CD8-positive, alpha-beta T cell (primary cell): ENCODE measurements at regions of chr12 and their contacts with region 1.

Region 1: DNA sequence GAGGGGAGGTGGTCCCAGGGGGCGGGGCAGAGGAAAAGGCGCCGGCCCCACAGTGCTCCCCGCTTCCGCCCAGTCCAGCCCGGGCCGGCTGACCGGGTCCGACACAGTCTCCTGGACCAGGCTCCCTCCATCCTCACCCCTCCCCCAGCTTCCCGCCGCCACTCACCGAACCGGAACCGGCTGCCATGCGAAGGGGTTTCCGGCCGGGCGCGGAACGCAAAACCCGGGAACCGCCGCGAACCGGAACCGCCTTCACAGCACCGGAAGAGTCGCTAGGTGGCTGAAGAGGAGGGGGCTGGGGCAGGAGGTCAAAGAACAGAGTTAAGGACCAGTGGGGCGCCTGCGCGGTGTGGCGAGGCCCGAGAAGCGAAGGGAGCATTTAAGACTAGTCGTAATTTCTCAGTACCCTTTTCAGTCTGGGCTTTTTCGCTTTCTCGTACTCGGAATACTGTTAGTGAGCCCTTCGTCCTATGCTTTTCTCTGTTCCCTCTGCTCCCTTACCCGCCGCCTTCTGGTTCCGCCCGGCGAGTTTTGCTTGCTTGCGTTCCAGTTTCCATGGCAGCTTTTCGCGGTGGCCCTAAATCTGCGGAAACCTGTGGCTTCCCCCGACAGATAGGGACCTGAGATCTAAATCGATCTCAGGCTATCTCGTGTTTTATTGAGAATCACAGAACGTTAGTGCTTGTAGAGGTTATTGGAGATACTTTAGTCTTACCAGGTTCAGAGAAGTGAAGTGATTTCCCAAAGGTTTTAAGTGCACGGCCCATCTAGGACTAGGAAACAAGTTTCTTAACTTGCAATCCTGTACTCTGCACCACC is at the start of gene SENP1:
- DNase-seq: peak; percentile 82 to 95 (median 89)
- ATAC-seq: peak; percentile 78
- H3K4me3 ChIP-seq: peak within 1 kb of the TSS; percentile 81 to 89
- H3K4me3 Mint-ChIP-seq: peak within 1 kb of the TSS; percentile 88
- H3K27ac ChIP-seq: peak within 1 kb of the TSS; percentile 84 to 95
- H3K27ac Mint-ChIP-seq: peak within 1 kb of the TSS; percentile 94
- H3K4me1 ChIP-seq: peaks cover 21% of the 10 kb centered on the region
- H3K4me1 Mint-ChIP-seq: peaks cover 54% of the 10 kb centered on the region
- H3K27me3 ChIP-seq: no peaks in the 10 kb centered on the region
- H3K27me3 Mint-ChIP-seq: no peaks in the 10 kb centered on the region
- CTCF ChIP-seq: no peak
- total RNA-seq, gene SENP1: 24.4 to 24.6 TPM

Region 2: DNA sequence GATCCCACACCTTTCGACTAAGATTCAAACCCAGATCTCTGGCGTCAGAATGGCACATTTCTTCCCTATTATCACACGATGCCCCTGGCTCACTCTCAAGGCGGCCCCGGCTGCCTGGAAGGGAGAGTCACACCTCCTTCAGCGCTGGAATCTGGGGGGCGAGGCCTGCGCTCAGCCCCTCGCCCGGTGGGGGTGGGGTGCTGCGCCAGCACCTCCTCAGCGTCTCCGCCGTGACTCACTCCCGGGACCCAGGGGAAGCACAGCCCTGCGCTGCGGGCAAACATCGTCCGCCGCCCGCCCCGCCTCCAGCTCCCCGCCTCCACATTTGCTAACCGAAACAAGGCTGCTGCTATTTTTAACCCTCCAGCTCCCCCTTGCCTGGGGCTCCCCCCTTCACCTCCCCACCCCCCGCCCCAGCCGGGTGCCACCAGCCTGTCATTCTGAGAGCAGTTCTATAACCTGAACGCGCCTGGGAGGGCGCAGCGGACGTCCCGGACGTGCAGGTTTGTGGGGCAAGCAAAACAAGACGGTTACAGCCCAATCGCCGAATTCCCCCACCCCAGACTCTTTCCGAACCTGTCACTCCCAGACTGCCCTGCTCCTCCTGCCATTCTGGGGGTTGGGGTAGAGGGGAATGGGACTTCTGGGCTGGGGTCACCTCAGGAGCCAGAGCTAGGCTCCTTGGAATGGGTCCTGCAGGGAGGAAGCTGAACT is 293.1 kb before region 1 on chr12:
- CTCF ChIA-PET with region 1: no interaction called
- POLR2A ChIA-PET with region 1: no interaction called
- intact Hi-C with region 1: loop called (anchors 5 to 10 kb)
- DNase-seq: peak; percentile 77 to 95 (median 92)
- ATAC-seq: peak; percentile 73
- H3K4me3 ChIP-seq: peak overlapping the region; percentile 44 to 59
- H3K4me3 Mint-ChIP-seq: peak overlapping the region; percentile 82
- H3K27ac ChIP-seq: peak overlapping the region; percentile 65 to 73
- H3K27ac Mint-ChIP-seq: peak overlapping the region; percentile 97
- H3K4me1 ChIP-seq: peaks cover 95% of the 10 kb centered on the region
- H3K4me1 Mint-ChIP-seq: peaks cover 93% of the 10 kb centered on the region
- H3K27me3 ChIP-seq: no peaks in the 10 kb centered on the region
- H3K27me3 Mint-ChIP-seq: no peaks in the 10 kb centered on the region
- CTCF ChIP-seq: no peak

Region 3: GRCh38 chr12:48119078-48119833 is 13.2 kb after region 1 on chr12 and contains the start of gene PFKM:
- CTCF ChIA-PET with region 1: interaction called, 4 read pairs
- POLR2A ChIA-PET with region 1: interaction called, 5 read pairs
- intact Hi-C with region 1: loop called in 1 of 2 experiments (anchors 2 kb)
- DNase-seq: peak; percentile 8 to 82 (median 52)
- ATAC-seq: peak; percentile 99
- H3K4me3 ChIP-seq: peak within 1 kb of the TSS; percentile 58 to 67
- H3K4me3 Mint-ChIP-seq: peak within 1 kb of the TSS; percentile 91
- H3K27ac ChIP-seq: no peak within 1 kb of the TSS
- H3K27ac Mint-ChIP-seq: peak within 1 kb of the TSS; percentile 70
- H3K4me1 ChIP-seq: peaks cover 7% of the 10 kb centered on the region
- H3K4me1 Mint-ChIP-seq: peaks cover 20% of the 10 kb centered on the region
- H3K27me3 ChIP-seq: no peaks in the 10 kb centered on the region
- H3K27me3 Mint-ChIP-seq: peaks cover 15% of the 10 kb centered on the region
- CTCF ChIP-seq: no peak
- total RNA-seq, gene PFKM: 6.0 to 6.9 TPM

Region 4: DNA sequence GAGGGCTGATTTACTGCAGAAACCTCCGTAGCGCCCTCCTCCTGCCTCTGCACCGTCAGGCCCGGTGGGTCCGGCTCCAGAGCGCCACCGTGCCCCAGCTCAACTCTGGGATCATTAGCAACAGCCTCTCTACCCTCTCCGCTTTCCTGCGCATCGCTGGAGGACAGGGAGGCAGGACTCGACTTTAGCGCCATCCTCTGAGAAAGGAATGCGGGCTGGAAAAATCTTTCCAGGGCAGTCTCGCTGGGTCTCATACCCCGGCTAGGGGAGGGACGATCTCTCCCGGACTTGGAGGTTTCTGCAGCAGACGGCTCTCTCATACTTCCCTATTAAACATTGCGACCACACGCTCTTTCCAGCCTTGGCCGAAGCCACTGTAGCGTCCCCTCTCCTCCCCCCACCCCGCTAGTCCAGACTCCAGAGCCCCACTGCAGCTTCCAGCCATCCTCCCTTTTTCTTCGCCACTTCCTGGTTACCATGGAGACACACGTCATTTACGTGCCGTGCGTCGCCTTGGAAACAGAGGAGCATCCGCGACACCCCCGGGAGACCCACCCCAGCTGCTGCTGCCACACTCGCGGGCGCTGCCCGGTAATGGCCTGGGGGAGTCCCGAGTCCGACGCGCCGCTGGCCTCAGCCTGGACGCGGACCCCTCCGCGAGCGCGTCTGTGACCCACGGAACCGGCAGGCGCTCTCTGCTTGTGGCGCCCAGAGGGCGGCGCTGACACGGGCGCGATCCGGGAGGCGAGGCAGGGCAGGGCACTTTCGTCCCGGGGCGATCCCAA is 77.2 kb after region 1 on chr12 and contains the start of gene CCDC184:
- CTCF ChIA-PET with region 1: no interaction called
- POLR2A ChIA-PET with region 1: interaction called, 3 read pairs
- intact Hi-C with region 1: loop called in 1 of 2 experiments (anchors 1 kb)
- DNase-seq: peak; percentile 48 to 93 (median 74)
- ATAC-seq: peak; percentile 80
- H3K4me3 ChIP-seq: peak within 1 kb of the TSS; percentile 75 to 99
- H3K4me3 Mint-ChIP-seq: peak within 1 kb of the TSS; percentile 93
- H3K27ac ChIP-seq: peak within 1 kb of the TSS; percentile 50 to 85
- H3K27ac Mint-ChIP-seq: peak within 1 kb of the TSS; percentile 43
- H3K4me1 ChIP-seq: peaks cover 14% of the 10 kb centered on the region
- H3K4me1 Mint-ChIP-seq: peaks cover 6% of the 10 kb centered on the region
- H3K27me3 ChIP-seq: peaks cover 6 to 12% of the 10 kb centered on the region in 2 experiments
- H3K27me3 Mint-ChIP-seq: peaks cover 29% of the 10 kb centered on the region
- CTCF ChIP-seq: peak; percentile 54
- total RNA-seq, gene CCDC184: 0.90 to 1.3 TPM

Region 5: GRCh38 chr12:48681738-48682532 is 575.9 kb after region 1 on chr12 and contains the start of gene KANSL2:
- CTCF ChIA-PET with region 1: no interaction called
- POLR2A ChIA-PET with region 1: no interaction called
- intact Hi-C with region 1: loop called in 1 of 2 experiments (anchors 5 kb)
- DNase-seq: peak; percentile 93 to 99 (median 96)
- ATAC-seq: peak; percentile 94
- H3K4me3 ChIP-seq: peak within 1 kb of the TSS; percentile 66 to 91
- H3K4me3 Mint-ChIP-seq: peak within 1 kb of the TSS; percentile 95
- H3K27ac ChIP-seq: peak within 1 kb of the TSS; percentile 80 to 90
- H3K27ac Mint-ChIP-seq: peak within 1 kb of the TSS; percentile 98
- H3K4me1 ChIP-seq: peaks cover 45% of the 10 kb centered on the region
- H3K4me1 Mint-ChIP-seq: peaks cover 49% of the 10 kb centered on the region
- H3K27me3 ChIP-seq: no peaks in the 10 kb centered on the region
- H3K27me3 Mint-ChIP-seq: no peaks in the 10 kb centered on the region
- CTCF ChIP-seq: no peak
- total RNA-seq, gene KANSL2: 175 to 179 TPM